CD8-positive, alpha-beta T cell (primary cell): ENCODE measurements at regions of chr2 and their contacts with region 1.

Region 1: GRCh38 chr2:172465417-172466334 is 38.3 kb downstream of the ITGA6 start:
- DNase-seq: peak; percentile 47 to 86 (median 76)
- ATAC-seq: peak; percentile 49
- H3K4me3 ChIP-seq: no peak overlapping the region
- H3K4me3 Mint-ChIP-seq: peak overlapping the region; percentile 6
- H3K27ac ChIP-seq: peak overlapping the region; percentile 24 to 66
- H3K27ac Mint-ChIP-seq: peak overlapping the region; percentile 94
- H3K4me1 ChIP-seq: peaks cover 53% of the 10 kb centered on the region
- H3K4me1 Mint-ChIP-seq: peaks cover 74% of the 10 kb centered on the region
- H3K27me3 ChIP-seq: no peaks in the 10 kb centered on the region
- H3K27me3 Mint-ChIP-seq: no peaks in the 10 kb centered on the region
- CTCF ChIP-seq: peak; percentile 94

Region 2: GRCh38 chr2:171687287-171688128 is 778.2 kb before region 1 on chr2 and contains the start of gene DYNC1I2:
- CTCF ChIA-PET with region 1: no interaction called
- POLR2A ChIA-PET with region 1: no interaction called
- intact Hi-C with region 1: loop called in 1 of 2 experiments (anchors 5 kb)
- DNase-seq: peak; percentile 33 to 89 (median 69)
- ATAC-seq: peak; percentile 76
- H3K4me3 ChIP-seq: peak within 1 kb of the TSS; percentile 89 to 93
- H3K4me3 Mint-ChIP-seq: peak within 1 kb of the TSS; percentile 94
- H3K27ac ChIP-seq: peak within 1 kb of the TSS; percentile 45 to 52
- H3K27ac Mint-ChIP-seq: peak within 1 kb of the TSS; percentile 91
- H3K4me1 ChIP-seq: peaks cover 11% of the 10 kb centered on the region
- H3K4me1 Mint-ChIP-seq: peaks cover 25% of the 10 kb centered on the region
- H3K27me3 ChIP-seq: no peaks in the 10 kb centered on the region
- H3K27me3 Mint-ChIP-seq: no peaks in the 10 kb centered on the region
- CTCF ChIP-seq: no peak
- total RNA-seq, gene DYNC1I2: 6.9 to 9.1 TPM

Region 3: GRCh38 chr2:171999604-172000469 is 465.8 kb before region 1 on chr2 and contains the start of gene METAP1D:
- CTCF ChIA-PET with region 1: no interaction called
- POLR2A ChIA-PET with region 1: no interaction called
- intact Hi-C with region 1: loop called in 1 of 2 experiments (anchors 10 kb)
- DNase-seq: peak; percentile 61 to 91 (median 81)
- ATAC-seq: peak; percentile 87
- H3K4me3 ChIP-seq: peak within 1 kb of the TSS; percentile 85 to 87
- H3K4me3 Mint-ChIP-seq: peak within 1 kb of the TSS; percentile 84
- H3K27ac ChIP-seq: peak within 1 kb of the TSS; percentile 57 to 69
- H3K27ac Mint-ChIP-seq: peak within 1 kb of the TSS; percentile 82
- H3K4me1 ChIP-seq: peaks cover 8% of the 10 kb centered on the region
- H3K4me1 Mint-ChIP-seq: peaks cover 23% of the 10 kb centered on the region
- H3K27me3 ChIP-seq: peaks cover 0 to 4% of the 10 kb centered on the region in 2 experiments
- H3K27me3 Mint-ChIP-seq: peaks cover 8% of the 10 kb centered on the region
- CTCF ChIP-seq: no peak
- total RNA-seq, gene METAP1D: 5.7 to 6.2 TPM

Region 4: DNA sequence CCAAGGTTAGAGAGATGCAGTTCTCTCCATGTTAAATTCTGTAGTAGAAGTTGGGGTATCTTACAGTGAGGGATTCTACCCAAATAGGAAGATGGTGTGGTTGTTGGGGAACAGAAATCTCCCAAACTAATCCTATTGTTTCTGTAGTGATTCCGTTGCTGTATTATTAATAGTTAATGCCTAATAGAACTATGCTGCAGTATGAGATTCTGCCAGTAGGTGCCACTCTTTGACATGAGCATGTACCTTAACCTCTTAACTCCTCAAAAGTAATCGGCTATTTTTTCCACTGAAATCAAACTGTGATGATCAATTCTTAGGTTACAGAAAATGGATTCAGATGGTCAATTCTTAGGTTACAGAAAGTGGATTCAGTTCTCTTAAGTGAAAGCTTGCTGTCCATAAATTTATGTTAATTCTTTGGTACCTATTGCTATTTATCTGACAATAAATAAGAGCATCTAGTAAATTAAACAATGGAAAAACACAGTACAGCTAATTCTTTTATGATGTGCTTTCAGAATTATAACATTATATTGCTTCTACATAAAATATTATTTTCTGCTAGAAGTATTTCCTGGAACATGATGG is 265.1 kb before region 1 on chr2:
- CTCF ChIA-PET with region 1: interaction called, 31 read pairs
- POLR2A ChIA-PET with region 1: no interaction called
- intact Hi-C with region 1: loop called in 1 of 2 experiments (anchors 1 kb)
- DNase-seq: peak in 3 of 9 experiments; percentile 17 to 31 (median 24)
- ATAC-seq: no peak
- H3K4me3 ChIP-seq: no peak overlapping the region
- H3K4me3 Mint-ChIP-seq: no peak overlapping the region
- H3K27ac ChIP-seq: no peak overlapping the region
- H3K27ac Mint-ChIP-seq: no peak overlapping the region
- H3K4me1 ChIP-seq: no peaks in the 10 kb centered on the region
- H3K4me1 Mint-ChIP-seq: peaks cover 5% of the 10 kb centered on the region
- H3K27me3 ChIP-seq: no peaks in the 10 kb centered on the region
- H3K27me3 Mint-ChIP-seq: peaks cover 5% of the 10 kb centered on the region
- CTCF ChIP-seq: peak; percentile 28

Region 5: GRCh38 chr2:172339371-172340010 is 126.2 kb before region 1 on chr2:
- CTCF ChIA-PET with region 1: interaction called, 6 read pairs
- POLR2A ChIA-PET with region 1: interaction called, 4 read pairs
- intact Hi-C with region 1: loop called (anchors 1 to 2 kb)
- DNase-seq: peak in 3 of 9 experiments; percentile 22 to 36 (median 23)
- ATAC-seq: peak; percentile 61
- H3K4me3 ChIP-seq: no peak overlapping the region
- H3K4me3 Mint-ChIP-seq: peak overlapping the region; percentile 76
- H3K27ac ChIP-seq: no peak overlapping the region
- H3K27ac Mint-ChIP-seq: no peak overlapping the region
- H3K4me1 ChIP-seq: peaks cover 17% of the 10 kb centered on the region
- H3K4me1 Mint-ChIP-seq: peaks cover 28% of the 10 kb centered on the region
- H3K27me3 ChIP-seq: no peaks in the 10 kb centered on the region
- H3K27me3 Mint-ChIP-seq: no peaks in the 10 kb centered on the region
- CTCF ChIP-seq: no peak

Region 6: GRCh38 chr2:172496160-172496608 is 30.5 kb after region 1 on chr2:
- CTCF ChIA-PET with region 1: interaction called, 19 read pairs
- POLR2A ChIA-PET with region 1: interaction called, 13 read pairs
- intact Hi-C with region 1: no loop called
- DNase-seq: peak in 7 of 9 experiments; percentile 30 to 78 (median 57)
- ATAC-seq: peak; percentile 94
- H3K4me3 ChIP-seq: peak overlapping the region in 1 of 2 experiments; percentile 4
- H3K4me3 Mint-ChIP-seq: peak overlapping the region; percentile 61
- H3K27ac ChIP-seq: peak overlapping the region; percentile 40 to 61
- H3K27ac Mint-ChIP-seq: peak overlapping the region; percentile 96
- H3K4me1 ChIP-seq: peaks cover 83% of the 10 kb centered on the region
- H3K4me1 Mint-ChIP-seq: peaks cover 75% of the 10 kb centered on the region
- H3K27me3 ChIP-seq: no peaks in the 10 kb centered on the region
- H3K27me3 Mint-ChIP-seq: no peaks in the 10 kb centered on the region
- CTCF ChIP-seq: no peak

Region 7: GRCh38 chr2:173231042-173231441 is 765.4 kb after region 1 on chr2:
- CTCF ChIA-PET with region 1: no interaction called
- POLR2A ChIA-PET with region 1: no interaction called
- intact Hi-C with region 1: no loop called
- DNase-seq: peak in 1 of 9 experiments; percentile 3
- ATAC-seq: no peak
- H3K4me3 ChIP-seq: no peak overlapping the region
- H3K4me3 Mint-ChIP-seq: no peak overlapping the region
- H3K27ac ChIP-seq: no peak overlapping the region
- H3K27ac Mint-ChIP-seq: no peak overlapping the region
- H3K4me1 ChIP-seq: no peaks in the 10 kb centered on the region
- H3K4me1 Mint-ChIP-seq: peaks cover 8% of the 10 kb centered on the region
- H3K27me3 ChIP-seq: no peaks in the 10 kb centered on the region
- H3K27me3 Mint-ChIP-seq: peaks cover 5% of the 10 kb centered on the region
- CTCF ChIP-seq: no peak